Right ventricle myocardium inferior (tissue), 1 donor: ENCODE measurements at regions of chr3 and their contacts with region 1.

Region 1: DNA sequence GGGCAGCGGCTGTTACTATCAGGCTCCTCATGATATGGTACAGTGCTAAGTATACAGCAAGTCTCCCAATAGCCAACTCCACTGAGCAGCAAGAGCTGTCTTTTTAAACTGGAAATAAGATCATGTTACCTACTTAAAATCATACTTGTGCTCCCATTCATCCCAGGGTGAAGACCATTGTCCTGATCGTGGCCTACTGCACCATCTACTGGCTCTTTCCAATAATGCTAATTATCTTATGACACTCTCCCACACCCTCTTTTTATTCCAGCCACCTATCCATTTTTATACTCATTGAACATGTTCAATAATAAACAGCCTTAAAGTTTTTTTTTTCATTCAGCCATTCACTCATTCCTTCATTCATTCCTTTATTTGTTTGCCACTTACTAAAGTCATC is 117.7 kb downstream of the GBE1 start:
- DNase-seq: no peak
- ATAC-seq: peak; percentile 71

Region 2: GRCh38 chr3:81302045-81302444 is 341.7 kb before region 1 on chr3:
- intact Hi-C with region 1: loop called (anchors 10 kb)
- DNase-seq: no peak
- ATAC-seq: peak; percentile 59

Region 3: DNA sequence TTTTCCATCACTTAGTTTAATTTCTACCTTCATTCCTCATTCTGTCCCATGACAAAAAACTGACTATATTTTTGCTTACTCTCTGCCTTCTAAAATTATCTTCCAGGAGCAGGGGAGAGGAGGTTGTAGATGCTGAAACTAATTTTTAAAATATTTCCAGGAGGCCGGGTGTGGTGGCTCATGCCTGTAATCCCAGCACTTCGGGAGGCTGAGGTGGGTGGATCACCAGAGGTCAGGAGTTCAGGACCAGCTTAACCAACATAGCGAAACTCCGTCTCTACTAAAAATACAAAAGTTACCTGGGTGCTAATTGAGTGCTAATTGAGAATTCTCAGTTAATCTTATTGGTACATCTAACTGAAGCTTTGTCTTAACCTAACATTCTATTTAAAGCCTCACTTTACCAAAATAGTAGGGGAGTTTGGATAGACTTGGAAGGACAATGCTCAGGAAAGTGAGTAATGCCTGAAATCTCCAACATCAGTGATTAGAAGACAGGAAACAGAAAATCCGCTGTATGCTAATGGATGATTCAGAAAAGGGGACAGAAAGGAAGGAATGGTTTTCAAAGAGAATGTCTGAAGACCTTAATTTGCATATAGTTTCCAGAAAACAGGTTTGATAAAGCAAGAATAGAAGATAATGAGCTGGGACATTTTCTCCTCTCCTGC is 218.4 kb before region 1 on chr3:
- intact Hi-C with region 1: loop called (anchors 10 kb)
- DNase-seq: no peak
- ATAC-seq: no peak

Region 4: DNA sequence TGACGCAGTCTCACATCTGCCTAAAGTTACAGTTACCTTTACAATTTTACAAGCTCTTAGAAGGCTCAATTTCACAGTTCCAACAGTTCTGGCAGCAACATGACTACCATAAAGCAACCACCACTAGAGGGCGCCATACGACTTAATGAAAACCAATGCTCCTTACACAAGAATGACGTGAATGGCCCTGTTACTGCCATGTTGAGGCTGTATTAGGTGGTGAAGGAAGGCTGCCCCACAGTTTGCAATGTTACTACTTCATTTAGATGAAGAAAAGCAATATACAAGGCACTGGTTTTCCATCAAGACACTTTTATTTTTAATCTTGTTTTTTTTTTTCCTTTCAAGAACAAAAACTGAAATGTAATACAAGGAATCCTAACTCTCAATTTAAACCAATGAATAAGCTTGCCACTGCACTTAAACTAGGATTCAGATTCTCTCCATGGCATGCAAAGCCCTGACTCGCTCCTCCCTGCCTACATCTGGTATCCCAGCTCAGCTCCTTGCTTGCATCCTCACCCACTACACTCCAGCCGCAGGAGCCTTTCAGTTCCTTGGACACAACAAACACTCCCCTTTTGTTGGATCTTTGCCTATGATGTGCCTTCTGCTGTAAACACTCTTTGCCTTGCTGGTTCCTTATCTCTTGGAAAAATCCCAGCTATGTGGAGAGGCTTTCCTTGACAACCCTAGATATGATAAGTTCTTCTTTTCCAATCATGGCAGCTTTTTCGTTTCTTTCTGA is 153.0 kb before region 1 on chr3:
- intact Hi-C with region 1: loop called (anchors 5 kb)
- DNase-seq: peak; percentile 48
- ATAC-seq: peak; percentile 78